ENCODE measurements at regions of chr19 and their contacts with region 1.

Region 1: GRCh38 chr19:11090054-11090900 is 1.0 kb downstream of the LDLR start:
- DNase-seq: peak; percentile 93 to 99 (median 97)
- ATAC-seq: peak; percentile 90 to 95 (median 93)
- H3K4me3 ChIP-seq: peak overlapping the region; percentile 83 to 87
- H3K4me3 Mint-ChIP-seq: peak overlapping the region; percentile 89 to 91 (median 89)
- H3K27ac ChIP-seq: peak overlapping the region; percentile 99
- H3K27ac Mint-ChIP-seq: peak overlapping the region; percentile 95 to 97
- H3K4me1 ChIP-seq: peaks cover 12 to 68% of the 10 kb centered on the region in 2 experiments
- H3K4me1 Mint-ChIP-seq: peaks cover 51 to 52% (median 52%) of the 10 kb centered on the region in 3 donors
- H3K27me3 ChIP-seq: no peaks in the 10 kb centered on the region
- H3K27me3 Mint-ChIP-seq: no peaks in the 10 kb centered on the region

Region 2: DNA sequence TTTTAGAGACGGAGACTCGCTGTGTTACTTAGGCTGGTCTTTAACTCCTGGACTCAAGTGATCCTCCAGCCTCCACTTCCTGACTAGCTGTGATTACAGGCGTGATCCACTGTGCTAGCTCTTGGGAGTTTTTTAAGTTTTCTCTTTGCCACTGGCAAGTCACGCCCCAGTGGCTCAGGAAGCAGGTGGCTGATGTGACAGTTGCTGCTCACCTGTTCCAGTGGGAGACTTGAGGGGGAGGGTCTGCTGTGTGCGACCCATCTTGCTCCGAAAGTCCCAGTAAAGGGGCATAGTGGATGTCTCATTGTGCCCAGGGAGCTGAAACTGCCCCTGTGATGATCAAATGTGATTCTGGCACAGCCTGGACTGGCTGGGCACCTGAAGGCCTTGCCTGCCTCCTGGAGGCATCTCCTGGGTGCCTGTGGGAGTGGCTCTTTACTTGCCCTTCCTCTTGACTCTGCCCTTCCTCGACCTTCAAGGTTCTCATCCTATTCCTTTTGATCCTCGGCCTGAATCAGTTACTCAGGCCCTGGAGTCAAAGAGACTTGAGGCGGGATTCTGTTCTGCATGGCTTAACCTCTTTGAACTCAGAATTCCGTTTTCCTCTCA is 121.6 kb before region 1 on chr19:
- CTCF ChIA-PET with region 1: no interaction called
- POLR2A ChIA-PET with region 1: no interaction called
- DNase-seq: no peak
- ATAC-seq: peak in 1 of 4 experiments; percentile 43
- H3K4me3 ChIP-seq: no peak overlapping the region
- H3K4me3 Mint-ChIP-seq: peak overlapping the region in 1 of 3 donors; percentile 28
- H3K27ac ChIP-seq: no peak overlapping the region
- H3K27ac Mint-ChIP-seq: peak overlapping the region in 1 of 2 donors; percentile 11
- H3K4me1 ChIP-seq: peaks cover 5 to 24% of the 10 kb centered on the region in 2 experiments
- H3K4me1 Mint-ChIP-seq: peaks cover 51 to 59% (median 55%) of the 10 kb centered on the region in 3 donors
- H3K27me3 ChIP-seq: no peaks in the 10 kb centered on the region
- H3K27me3 Mint-ChIP-seq: no peaks in the 10 kb centered on the region

Region 3: DNA sequence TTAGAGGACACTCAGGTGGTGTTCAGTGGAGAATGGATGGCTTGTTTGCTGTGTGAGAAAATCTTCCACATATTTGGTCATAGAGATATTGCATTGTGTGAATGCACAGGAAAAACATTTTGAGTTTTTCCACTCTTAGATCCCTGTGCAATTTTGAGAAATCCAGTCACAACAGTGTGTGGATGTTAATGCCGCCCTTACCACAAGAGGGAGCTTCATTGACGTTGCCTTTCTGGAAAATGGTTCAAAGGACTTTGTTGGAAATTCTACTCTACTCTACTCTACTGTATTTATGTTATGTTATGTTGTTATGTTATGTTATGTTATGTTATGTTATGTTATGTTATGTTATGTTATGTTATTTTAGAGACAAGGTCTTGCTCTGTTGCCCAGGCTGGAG is 1036.4 kb after region 1 on chr19:
- CTCF ChIA-PET with region 1: no interaction called
- POLR2A ChIA-PET with region 1: interaction called in 1 of 2 experiments, 15 read pairs
- DNase-seq: peak in 5 of 35 experiments; percentile 2 to 43 (median 4)
- ATAC-seq: no peak
- H3K4me3 ChIP-seq: no peak overlapping the region
- H3K4me3 Mint-ChIP-seq: no peak overlapping the region
- H3K27ac ChIP-seq: no peak overlapping the region
- H3K27ac Mint-ChIP-seq: no peak overlapping the region
- H3K4me1 ChIP-seq: no peaks in the 10 kb centered on the region
- H3K4me1 Mint-ChIP-seq: no peaks in the 10 kb centered on the region
- H3K27me3 ChIP-seq: peaks cover 0 to 2% of the 10 kb centered on the region in 2 experiments
- H3K27me3 Mint-ChIP-seq: no peaks in the 10 kb centered on the region

Measured in T-cell (primary cell).